ENCODE measurements at regions of chr1 and their contacts with region 1.

Region 1: DNA sequence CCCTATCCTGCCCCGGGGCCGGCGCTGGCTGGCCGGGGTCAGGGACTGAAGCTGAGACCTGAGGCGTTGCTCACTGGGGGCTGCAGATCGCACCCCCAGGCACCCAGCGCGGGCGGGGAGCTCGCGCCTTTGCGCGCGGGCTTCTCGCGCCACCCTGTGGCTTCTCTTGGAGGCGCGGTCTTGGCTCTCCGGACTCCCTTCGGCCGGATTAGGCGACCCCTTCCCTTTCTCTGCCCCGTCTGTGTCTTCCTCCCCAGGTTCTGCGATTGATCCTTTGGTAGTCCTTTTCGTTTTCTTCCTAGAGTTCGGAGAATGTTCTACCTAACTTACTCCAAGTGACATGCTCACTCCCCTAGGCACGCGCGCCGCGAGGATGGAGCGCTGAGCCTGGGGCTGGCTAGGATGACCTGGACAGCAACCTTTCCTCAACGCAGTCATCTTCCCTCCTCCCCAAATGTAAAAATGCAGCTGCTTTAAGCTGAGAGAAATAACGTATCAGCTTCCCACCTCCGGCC is 495 bp upstream of the NTRK1 start:
- DNase-seq: peak; percentile 40
- H3K4me3 ChIP-seq: peak overlapping the region in 2 of 3 experiments; percentile 1 to 30
- H3K27ac ChIP-seq: no peak overlapping the region
- H3K4me1 ChIP-seq: peaks cover 17% of the 10 kb centered on the region
- H3K27me3 ChIP-seq: peaks cover 39 to 40% of the 10 kb centered on the region in 2 experiments
- CTCF ChIP-seq: peak; percentile 79 to 90
- POLR2A ChIP-seq: no peak

Region 2: DNA sequence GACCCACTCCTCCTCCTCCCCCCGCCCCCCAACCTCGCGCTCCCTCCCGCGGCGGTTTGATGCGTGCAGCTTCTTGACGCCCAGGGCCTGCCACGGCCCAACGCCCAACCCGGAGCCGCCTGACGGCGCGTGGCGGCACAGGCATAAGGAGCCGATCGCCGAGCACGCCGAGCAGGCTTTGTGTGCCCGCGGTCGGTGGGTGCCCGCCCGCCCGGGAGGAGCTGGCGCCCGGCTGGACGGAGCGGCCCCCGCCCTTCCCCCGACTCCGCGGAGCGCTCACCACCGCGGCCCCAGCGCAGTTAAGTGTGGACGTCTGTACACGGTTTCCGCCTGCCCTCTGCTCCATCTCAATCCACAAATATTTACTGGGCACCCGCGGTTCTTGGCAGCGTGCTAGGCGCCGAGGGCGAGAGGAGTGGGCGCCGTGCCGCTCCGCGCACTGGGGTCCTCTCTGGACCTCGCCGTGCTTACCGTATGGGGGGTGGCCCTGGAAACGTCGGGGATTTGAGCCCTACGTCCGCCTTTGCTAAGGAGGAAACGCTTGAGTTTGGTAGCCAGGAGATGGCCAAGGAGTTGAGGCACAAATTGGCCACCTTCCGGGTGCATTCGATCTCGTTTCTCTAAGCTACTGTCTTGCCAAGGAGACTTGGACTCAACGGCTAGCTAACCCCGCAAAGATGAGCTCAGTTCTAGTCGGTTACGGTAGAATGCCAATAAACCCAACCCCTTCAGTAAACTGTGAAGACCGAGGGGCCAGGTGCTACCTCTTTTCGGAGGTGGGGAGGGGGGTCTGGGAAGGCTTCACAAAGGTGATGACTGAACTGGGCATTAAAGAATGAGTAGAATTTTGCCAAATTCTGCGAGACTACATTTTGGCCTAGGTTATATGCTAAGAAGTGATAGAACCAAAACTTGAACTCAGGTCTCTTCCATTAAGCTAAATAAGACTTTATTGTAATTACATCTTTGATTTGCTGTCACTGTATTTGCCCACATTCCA is 108.1 kb before region 1 on chr1:
- CTCF ChIA-PET with region 1: interaction called, 17 read pairs
- POLR2A ChIA-PET with region 1: no interaction called
- dilution Hi-C with region 1: no loop called
- intact Hi-C with region 1: no loop called
- DNase-seq: peak; percentile 97
- H3K4me3 ChIP-seq: peak overlapping the region; percentile 30 to 94 (median 73)
- H3K27ac ChIP-seq: peak overlapping the region; percentile 60
- H3K4me1 ChIP-seq: peaks cover 42% of the 10 kb centered on the region
- H3K27me3 ChIP-seq: no peaks in the 10 kb centered on the region
- CTCF ChIP-seq: peak in 1 of 2 donors; percentile 29
- POLR2A ChIP-seq: peak; percentile 72

Region 3: DNA sequence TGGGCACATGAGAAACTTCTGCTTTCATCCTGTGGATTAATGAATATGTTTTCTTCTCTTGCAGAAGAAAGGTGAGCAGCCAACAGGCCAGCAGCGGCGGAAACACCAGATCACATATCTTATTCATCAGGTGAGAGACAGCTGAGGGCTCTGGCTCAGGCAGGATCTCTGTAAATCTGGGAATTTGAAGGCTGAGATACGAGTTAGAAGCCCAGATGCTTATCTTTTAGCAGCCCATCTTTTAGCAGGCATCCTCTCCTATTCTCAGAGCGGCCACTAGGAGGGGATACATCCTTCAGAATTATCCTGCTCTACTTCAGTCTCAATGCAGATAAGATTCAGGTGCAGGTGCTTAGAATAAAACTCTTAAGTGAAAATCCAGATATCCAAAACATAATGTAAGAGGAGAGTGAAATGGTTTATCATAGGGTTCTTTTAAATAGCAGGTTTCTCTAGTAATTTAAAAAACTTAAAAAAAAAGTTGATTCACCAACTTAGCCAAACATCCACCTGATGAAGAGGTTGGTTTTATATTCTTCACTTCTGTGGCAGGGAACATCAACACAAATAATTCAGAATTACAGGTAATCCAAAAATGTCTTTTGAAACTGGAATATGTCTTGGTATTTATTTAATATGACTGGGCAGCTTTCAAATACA is 62.8 kb before region 1 on chr1:
- CTCF ChIA-PET with region 1: interaction called, 125 read pairs
- POLR2A ChIA-PET with region 1: no interaction called
- dilution Hi-C with region 1: no loop called
- intact Hi-C with region 1: loop called (anchors 1 kb)
- DNase-seq: peak; percentile 75
- H3K4me3 ChIP-seq: no peak overlapping the region
- H3K27ac ChIP-seq: no peak overlapping the region
- H3K4me1 ChIP-seq: no peaks in the 10 kb centered on the region
- H3K27me3 ChIP-seq: no peaks in the 10 kb centered on the region
- CTCF ChIP-seq: peak; percentile 61 to 72
- POLR2A ChIP-seq: no peak

Region 4: GRCh38 chr1:156821801-156822200 is 38.4 kb before region 1 on chr1:
- CTCF ChIA-PET with region 1: interaction called, 67 read pairs
- POLR2A ChIA-PET with region 1: no interaction called
- dilution Hi-C with region 1: no loop called
- intact Hi-C with region 1: no loop called
- DNase-seq: no peak
- H3K4me3 ChIP-seq: no peak overlapping the region
- H3K27ac ChIP-seq: no peak overlapping the region
- H3K4me1 ChIP-seq: peaks cover 4% of the 10 kb centered on the region
- H3K27me3 ChIP-seq: peaks cover 15 to 22% of the 10 kb centered on the region in 2 experiments
- CTCF ChIP-seq: no peak
- POLR2A ChIP-seq: no peak

Region 5: DNA sequence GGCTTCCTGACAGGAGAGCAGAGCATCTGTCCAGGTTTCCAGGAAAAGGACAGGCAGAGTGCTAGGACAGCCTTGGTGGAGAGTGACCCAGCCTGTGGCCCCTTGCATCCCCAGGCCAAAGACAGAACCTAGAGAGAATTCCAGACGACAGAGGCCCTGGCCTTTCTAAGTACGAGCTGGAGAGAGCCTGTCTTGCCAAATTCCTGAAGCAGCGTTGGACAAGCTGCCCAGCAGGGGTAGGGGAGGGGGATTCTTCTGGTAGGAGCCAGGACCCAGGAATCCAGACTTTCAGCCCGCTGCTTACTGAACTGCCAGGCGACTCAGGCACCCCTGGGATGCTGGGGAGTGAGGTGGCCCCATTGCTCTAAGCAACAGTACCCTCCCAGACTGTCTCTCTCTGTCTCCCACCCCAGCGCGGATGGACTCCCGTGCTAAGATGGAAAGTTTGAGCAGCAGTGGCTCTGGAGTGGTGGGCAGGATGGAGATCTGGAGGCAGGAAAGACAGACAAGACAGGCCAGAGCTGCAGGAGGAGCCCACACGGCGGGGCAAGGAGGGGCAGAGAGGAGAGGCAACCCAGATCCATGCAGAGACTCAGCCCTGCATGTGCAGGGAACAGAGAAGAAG is 24.5 kb after region 1 on chr1:
- CTCF ChIA-PET with region 1: interaction called, 36 read pairs
- POLR2A ChIA-PET with region 1: no interaction called
- dilution Hi-C with region 1: no loop called
- intact Hi-C with region 1: no loop called
- DNase-seq: no peak
- H3K4me3 ChIP-seq: no peak overlapping the region
- H3K27ac ChIP-seq: no peak overlapping the region
- H3K4me1 ChIP-seq: peaks cover 2% of the 10 kb centered on the region
- H3K27me3 ChIP-seq: peaks cover 5 to 22% of the 10 kb centered on the region in 2 experiments
- CTCF ChIP-seq: no peak
- POLR2A ChIP-seq: no peak

Region 6: GRCh38 chr1:157831968-157832626 is 971.9 kb after region 1 on chr1:
- CTCF ChIA-PET with region 1: no interaction called
- POLR2A ChIA-PET with region 1: no interaction called
- dilution Hi-C with region 1: no loop called
- intact Hi-C with region 1: no loop called
- DNase-seq: no peak
- H3K4me3 ChIP-seq: no peak overlapping the region
- H3K27ac ChIP-seq: no peak overlapping the region
- H3K4me1 ChIP-seq: no peaks in the 10 kb centered on the region
- H3K27me3 ChIP-seq: no peaks in the 10 kb centered on the region
- CTCF ChIP-seq: no peak
- POLR2A ChIP-seq: no peak